Head of caudate nucleus (tissue), 42 donors: ENCODE measurements at regions of chr19 and their contacts with region 1.

Region 1: DNA sequence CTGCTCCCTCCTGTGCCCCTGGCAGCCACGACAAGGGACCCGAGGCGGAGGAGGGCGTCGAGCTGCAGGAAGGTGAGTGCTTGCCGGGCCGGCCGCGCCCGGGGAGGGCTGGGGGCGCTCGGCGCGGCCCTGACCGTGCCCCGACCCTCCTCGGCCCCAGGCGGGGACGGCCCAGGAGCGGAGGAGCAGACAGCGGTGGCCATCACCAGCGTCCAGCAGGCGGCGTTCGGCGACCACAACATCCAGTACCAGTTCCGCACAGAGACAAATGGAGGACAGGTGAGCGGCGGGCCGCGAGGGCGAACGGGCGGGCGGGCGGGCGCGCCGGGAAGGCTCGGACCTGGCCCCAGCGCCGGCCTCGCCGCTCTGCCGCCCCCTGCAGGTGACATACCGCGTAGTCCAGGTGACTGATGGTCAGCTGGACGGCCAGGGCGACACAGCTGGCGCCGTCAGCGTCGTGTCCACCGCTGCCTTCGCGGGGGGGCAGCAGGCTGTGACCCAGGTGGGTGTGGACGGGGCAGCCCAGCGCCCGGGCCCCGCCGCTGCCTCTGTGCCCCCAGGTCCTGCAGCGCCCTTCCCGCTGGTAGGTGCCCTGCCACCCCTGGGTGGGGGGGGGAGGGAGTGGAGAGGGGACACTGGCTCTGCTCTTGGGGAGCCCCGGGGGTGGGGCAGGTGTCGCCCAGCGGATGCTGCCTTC is 807 bp downstream of the USF2 start:
- DNase-seq: peak; percentile 81 to 96 (median 90)

Region 2: DNA sequence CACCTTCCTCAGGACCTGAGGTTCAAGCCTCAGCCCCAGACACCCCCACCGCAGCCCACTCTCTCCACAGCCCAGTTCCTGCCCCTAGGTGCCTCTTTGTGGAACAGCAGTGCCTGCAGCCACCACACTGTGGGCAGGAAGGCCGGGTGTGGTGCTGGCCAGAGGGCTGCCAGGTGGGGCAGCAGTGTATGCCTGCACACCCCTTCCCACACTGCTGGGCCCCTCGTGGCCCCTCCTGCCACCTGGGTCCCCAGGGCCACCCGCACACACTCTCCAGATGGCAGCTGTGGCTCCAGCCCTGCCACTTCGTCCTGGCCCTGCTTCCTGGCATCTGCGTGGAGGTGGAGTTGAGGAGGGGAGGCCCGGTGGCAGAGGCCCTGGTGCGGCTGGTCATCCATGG is 192.9 kb before region 1 on chr19:
- intact Hi-C with region 1: no loop called
- DNase-seq: no peak

Region 3: GRCh38 chr19:35140962-35141637 is 128.5 kb before region 1 on chr19:
- intact Hi-C with region 1: loop called (anchors 5 kb)
- DNase-seq: peak; percentile 88 to 98 (median 96)